ENCODE measurements at regions of chr3 and their contacts with region 1.

Region 1: DNA sequence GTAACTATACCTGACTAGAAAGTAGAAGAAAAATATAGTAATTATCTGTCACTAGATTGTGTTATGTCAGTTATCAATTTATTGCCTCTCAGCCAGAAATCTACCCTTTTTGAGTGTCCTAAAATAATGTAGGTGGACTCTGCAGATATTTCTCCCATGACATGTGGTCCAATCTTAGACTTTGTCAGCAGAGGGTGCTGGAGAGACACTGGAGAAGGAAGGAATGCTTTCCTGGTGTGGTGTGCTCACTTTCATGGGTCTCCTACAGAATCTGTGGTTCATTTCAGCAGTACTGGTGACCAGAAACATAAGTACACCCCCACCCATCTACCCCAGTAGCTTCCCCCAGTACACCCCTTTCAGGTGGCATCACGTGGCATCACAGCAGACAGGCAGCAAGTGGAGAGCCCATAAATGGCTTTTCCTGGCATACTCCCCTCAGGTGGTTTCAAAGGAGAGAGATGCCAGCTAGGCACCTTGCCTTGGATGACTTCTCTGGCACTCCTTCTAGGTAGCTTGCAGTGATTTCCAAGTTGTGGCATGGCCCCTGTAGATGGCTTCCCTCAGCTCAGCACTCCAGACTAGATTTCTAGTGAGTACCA is 114.7 kb downstream of the GADL1 start:
- DNase-seq: no peak
- H3K4me3 ChIP-seq: no peak overlapping the region
- CTCF ChIP-seq: no peak
- POLR2A ChIP-seq: no peak

Region 2: GRCh38 chr3:31448035-31448881 is 668.5 kb after region 1 on chr3:
- intact Hi-C with region 1: loop called (anchors 10 kb)
- DNase-seq: no peak
- H3K4me3 ChIP-seq: no peak overlapping the region
- CTCF ChIP-seq: no peak
- POLR2A ChIP-seq: no peak

Measured in lower leg skin (tissue), 4 donors.